ENCODE measurements at regions of chr1 and their contacts with region 1.

Region 1: DNA sequence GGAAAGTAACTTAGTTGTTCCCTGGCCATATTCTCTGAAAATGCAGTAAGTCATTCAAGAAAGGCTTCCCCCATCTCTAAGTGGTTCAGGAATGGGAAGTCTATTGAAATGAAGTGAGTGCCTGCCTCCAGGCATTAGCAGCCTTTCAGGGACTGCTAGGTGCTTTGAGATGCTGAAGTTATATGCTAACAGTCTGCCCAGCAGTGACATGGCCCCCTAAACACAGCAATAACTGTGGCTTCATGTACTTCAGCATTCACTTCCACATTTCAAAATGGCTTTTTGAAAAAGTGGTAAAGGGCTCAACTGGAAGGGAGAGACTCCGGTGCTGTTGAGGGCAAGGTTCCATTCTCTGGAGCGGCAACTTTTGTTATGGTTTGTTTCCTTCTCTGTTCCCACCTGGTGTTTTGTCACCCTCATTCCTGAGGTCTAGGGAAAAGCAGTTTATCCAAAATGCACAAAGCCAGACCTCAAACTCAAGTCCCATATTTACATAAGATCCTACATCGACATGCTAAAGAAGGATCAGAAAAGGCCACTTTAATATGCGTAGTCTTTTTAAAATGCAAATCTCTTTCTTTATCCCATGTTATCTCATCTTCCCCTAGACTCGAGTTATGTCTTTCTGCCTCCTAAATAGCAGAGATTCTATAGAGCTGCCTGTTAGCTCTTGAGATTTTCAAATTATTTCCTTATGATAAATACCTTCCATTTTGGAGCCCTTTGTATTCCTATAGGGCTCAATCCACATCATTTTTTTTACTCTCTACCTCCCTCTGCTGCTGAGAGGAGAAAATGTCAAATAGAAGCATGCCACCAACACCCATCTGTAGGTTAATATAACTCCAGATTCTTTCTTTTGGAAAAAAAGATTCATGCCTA is 34.2 kb upstream of the LRRC8C start:
- DNase-seq: peak; percentile 71
- ATAC-seq: peak; percentile 76
- H3K4me3 ChIP-seq: no peak overlapping the region
- H3K27ac ChIP-seq: no peak overlapping the region
- H3K4me1 ChIP-seq: peaks cover 13% of the 10 kb centered on the region
- H3K27me3 ChIP-seq: no peaks in the 10 kb centered on the region
- CTCF ChIP-seq: peak; percentile 77

Region 2: GRCh38 chr1:89483010-89483756 is 115.5 kb before region 1 on chr1:
- CTCF ChIA-PET with region 1: interaction called, 3 read pairs
- POLR2A ChIA-PET with region 1: no interaction called
- intact Hi-C with region 1: loop called (anchors 1 kb)
- DNase-seq: peak; percentile 86
- ATAC-seq: peak; percentile 96
- H3K4me3 ChIP-seq: no peak overlapping the region
- H3K27ac ChIP-seq: no peak overlapping the region
- H3K4me1 ChIP-seq: no peaks in the 10 kb centered on the region
- H3K27me3 ChIP-seq: no peaks in the 10 kb centered on the region
- CTCF ChIP-seq: peak; percentile 89

Region 3: DNA sequence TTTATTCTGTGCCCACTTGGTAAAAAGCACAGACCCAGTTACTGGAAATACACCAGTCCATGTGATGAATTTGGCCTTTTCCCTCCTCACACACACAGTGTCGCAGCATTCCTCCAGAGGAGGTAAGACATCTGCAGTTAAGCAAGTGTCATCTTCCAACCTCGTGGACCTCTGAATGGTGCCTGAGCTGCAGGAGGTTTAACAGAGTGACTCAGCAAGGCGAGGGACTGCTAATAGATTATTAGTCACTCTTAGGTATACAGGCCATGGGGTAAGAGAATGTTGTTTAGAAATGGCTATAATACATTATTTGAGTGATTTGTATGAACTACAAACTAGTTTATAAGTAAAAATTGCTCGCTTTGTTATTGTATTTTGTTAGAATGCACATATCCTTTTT is 82.6 kb before region 1 on chr1:
- CTCF ChIA-PET with region 1: no interaction called
- POLR2A ChIA-PET with region 1: no interaction called
- intact Hi-C with region 1: loop called (anchors 1 kb)
- DNase-seq: peak; percentile 92
- ATAC-seq: peak; percentile 99
- H3K4me3 ChIP-seq: no peak overlapping the region
- H3K27ac ChIP-seq: peak overlapping the region; percentile 63
- H3K4me1 ChIP-seq: peaks cover 20% of the 10 kb centered on the region
- H3K27me3 ChIP-seq: no peaks in the 10 kb centered on the region
- CTCF ChIP-seq: no peak

Region 4: DNA sequence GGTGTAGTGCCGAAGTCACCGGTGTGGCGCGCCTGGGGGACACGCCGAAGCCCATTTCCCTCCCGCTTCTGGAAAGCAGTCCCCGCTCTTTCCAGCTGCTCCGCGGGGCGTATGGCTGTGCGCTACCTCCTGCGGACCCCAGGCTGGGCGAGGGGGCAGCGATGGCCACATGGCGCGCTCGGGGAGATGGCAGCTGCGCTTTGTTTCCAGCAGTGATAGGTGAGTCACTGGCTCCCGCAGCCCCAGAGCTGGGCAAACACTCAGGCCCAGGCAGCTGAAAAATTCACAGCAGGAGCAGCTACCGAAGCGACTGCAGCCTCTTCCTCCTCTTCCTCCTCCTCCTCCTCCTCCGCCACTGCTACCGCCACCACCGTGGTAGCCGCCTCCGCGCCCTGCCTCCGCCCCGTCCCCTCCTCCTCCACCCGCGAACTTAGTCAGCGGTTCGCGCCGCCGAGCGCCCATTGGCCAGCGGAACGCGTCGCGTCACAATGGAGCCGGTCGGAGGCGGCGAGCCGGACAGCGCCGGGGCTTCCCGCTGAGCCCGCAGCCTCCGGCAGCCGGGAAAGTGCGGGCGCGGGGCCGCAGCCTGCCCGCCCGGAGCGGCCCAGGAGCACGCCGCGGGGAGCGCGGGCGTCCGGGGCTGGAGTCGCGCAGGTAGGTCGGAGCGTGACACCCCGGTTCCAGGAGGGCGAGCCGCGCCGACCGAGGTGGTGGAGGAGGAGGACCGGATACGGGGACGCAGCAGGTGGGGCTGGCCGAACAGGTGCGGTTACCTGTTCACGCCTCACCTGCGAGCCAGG is 74.1 kb before region 1 on chr1 and contains the start of gene LRRC8B:
- CTCF ChIA-PET with region 1: no interaction called
- POLR2A ChIA-PET with region 1: no interaction called
- intact Hi-C with region 1: loop called (anchors 1 kb)
- DNase-seq: peak; percentile 93
- ATAC-seq: peak; percentile 92
- H3K4me3 ChIP-seq: peak within 1 kb of the TSS; percentile 92
- H3K27ac ChIP-seq: peak within 1 kb of the TSS; percentile 79
- H3K4me1 ChIP-seq: peaks cover 23% of the 10 kb centered on the region
- H3K27me3 ChIP-seq: no peaks in the 10 kb centered on the region
- CTCF ChIP-seq: no peak
- total RNA-seq, gene LRRC8B: 8.4 and 12.3 TPM in 2 replicates

Region 5: DNA sequence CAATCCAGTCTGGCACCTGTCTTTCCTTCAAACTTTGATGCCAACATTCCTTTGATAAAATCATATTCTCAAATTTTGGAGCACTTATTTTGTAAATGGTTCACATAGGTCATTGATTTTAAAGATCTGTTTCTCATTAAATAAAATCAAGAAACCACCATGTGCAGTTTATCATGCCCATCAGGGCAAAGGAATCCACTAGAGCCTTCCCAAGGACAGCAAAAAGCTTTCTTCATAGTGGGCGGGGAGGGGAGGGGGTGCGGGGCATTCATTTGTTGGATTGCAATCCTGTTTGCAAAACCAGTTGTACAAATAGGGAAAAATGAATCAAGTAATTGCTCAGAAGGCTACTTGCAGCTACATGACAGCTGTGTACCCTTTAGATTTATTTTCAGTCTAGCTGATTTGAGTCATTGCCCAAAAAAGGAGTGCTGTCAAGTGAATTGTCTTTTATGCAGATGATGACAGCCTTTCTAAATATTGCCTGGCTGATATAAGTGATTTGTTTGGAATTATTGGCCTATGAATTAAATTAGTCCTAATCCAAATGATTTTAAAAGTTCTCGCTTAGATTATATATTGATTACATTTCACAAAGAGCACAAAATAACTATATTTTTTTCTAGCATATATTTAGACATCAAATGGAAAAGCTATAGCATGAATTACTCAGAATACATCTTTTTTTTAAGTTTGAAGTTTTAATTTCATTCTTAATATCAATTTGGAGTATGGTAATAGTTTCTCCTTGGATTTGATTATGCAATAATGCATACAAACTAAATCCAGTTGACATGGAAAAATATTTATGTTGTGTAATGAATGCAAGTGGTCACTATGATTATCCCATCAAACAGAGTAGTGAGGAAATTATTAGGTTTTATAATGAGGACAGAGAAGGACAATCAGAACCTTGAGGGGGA is 50.9 kb before region 1 on chr1:
- CTCF ChIA-PET with region 1: no interaction called
- POLR2A ChIA-PET with region 1: no interaction called
- intact Hi-C with region 1: loop called (anchors 2 kb)
- DNase-seq: peak; percentile 91
- ATAC-seq: peak; percentile 75
- H3K4me3 ChIP-seq: no peak overlapping the region
- H3K27ac ChIP-seq: peak overlapping the region; percentile 60
- H3K4me1 ChIP-seq: peaks cover 40% of the 10 kb centered on the region
- H3K27me3 ChIP-seq: no peaks in the 10 kb centered on the region
- CTCF ChIP-seq: no peak

Region 6: GRCh38 chr1:89681045-89681729 is 82.5 kb after region 1 on chr1:
- CTCF ChIA-PET with region 1: no interaction called
- POLR2A ChIA-PET with region 1: no interaction called
- intact Hi-C with region 1: no loop called
- DNase-seq: no peak
- ATAC-seq: no peak
- H3K4me3 ChIP-seq: no peak overlapping the region
- H3K27ac ChIP-seq: no peak overlapping the region
- H3K4me1 ChIP-seq: no peaks in the 10 kb centered on the region
- H3K27me3 ChIP-seq: no peaks in the 10 kb centered on the region
- CTCF ChIP-seq: no peak

Measured in PC-3 (cell line).